ENCODE measurements at regions of chr2 and their contacts with region 1.

Region 1: DNA sequence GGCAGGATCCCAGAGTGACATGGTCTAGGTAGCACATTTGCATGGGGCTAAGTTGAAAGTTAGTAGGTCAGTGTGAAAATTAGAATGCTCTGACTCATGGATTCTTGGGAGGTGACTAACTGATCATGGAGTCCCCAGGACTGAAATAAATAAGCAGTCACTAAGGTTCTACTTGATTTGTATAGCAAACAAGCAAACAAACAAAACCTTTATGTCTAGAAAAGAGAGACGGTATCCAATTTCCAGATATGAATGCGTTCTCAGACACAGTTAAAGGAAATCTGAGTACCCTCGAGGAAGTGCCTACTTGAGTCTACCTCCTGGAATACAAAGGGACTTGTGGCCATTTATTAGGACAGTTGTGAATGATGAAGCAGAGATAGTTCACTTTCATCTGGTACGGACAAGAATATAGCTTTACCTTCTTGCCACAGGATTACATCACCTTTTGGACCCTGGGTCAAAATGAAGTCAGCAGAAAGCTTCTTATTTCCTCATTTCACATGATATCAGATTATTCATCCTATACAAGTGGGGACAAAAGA is 54.3 kb upstream of the AGPS start:
- DNase-seq: peak; percentile 63
- H3K27ac ChIP-seq: no peak overlapping the region
- CTCF ChIP-seq: no peak

Region 2: DNA sequence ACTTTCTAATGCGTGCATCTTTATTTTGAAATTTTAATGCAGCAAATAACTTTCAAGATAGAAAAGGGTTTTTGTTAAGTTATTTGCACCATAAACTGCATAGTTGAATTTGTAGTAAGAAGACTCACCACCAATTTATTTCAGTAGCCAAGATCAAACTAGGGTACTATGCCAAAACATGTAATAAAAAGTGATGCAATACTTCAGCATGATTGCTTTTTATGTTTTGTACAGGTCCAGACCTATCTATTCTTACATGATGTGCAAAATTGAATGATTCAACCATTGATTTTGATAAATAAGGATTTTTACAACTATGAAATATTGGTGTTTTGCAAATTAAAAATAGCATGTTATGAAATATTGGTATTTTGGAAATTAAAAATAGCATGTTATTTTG is 81.0 kb after region 1 on chr2:
- CTCF ChIA-PET with region 1: interaction called, 14 read pairs
- POLR2A ChIA-PET with region 1: no interaction called
- DNase-seq: peak; percentile 59
- H3K27ac ChIP-seq: no peak overlapping the region
- CTCF ChIP-seq: no peak

Region 3: DNA sequence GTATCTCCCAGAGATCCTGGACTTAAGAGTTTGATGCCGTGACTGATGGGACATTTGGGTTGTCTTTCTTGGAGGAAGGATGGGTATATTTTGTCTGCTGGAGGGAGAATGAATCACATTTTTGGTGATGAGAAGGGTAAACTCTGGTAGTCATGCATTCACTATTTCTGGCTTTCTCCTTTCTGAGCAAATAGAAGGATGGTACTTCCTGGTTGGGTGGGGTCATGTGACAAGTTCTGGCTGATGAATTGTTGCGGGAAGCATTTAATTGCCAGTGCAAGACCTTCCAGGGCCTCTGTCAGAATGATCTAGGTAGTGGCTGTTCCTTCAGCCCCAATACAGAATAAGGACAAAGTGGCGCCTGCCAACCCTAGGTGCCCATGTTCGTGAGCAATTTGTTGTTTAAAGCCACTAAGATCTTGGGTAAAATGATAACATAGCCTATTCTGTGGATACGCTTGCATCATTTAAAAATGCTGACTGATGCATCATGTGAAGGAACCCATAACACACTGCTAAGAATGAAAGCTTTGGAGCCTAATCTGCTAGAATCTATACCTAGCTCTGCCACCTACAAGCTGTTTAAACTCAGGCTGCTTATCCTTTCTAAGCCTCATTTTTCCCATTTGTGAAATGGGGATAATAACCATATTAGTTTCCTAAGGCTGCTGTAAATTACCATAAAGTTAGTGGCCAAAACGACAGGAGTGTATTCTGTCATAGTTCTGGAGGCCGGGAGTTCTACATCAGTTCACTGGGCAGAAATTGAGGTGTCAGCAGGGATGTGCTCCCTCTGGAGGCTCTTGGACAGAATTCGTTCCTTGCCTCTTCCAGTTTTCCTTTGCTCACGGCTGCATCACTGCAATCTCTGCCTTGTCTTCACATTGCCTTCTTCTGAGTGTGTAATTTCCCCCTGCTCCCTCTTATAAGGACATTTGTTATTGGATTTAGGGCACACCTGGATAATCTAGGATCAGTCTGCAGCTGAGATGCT is 335.6 kb after region 1 on chr2:
- CTCF ChIA-PET with region 1: no interaction called
- POLR2A ChIA-PET with region 1: no interaction called
- DNase-seq: no peak
- H3K27ac ChIP-seq: no peak overlapping the region
- CTCF ChIP-seq: no peak

Measured in RWPE1 (cell line).